ENCODE measurements at regions of chr9 and their contacts with region 1.

Region 1: DNA sequence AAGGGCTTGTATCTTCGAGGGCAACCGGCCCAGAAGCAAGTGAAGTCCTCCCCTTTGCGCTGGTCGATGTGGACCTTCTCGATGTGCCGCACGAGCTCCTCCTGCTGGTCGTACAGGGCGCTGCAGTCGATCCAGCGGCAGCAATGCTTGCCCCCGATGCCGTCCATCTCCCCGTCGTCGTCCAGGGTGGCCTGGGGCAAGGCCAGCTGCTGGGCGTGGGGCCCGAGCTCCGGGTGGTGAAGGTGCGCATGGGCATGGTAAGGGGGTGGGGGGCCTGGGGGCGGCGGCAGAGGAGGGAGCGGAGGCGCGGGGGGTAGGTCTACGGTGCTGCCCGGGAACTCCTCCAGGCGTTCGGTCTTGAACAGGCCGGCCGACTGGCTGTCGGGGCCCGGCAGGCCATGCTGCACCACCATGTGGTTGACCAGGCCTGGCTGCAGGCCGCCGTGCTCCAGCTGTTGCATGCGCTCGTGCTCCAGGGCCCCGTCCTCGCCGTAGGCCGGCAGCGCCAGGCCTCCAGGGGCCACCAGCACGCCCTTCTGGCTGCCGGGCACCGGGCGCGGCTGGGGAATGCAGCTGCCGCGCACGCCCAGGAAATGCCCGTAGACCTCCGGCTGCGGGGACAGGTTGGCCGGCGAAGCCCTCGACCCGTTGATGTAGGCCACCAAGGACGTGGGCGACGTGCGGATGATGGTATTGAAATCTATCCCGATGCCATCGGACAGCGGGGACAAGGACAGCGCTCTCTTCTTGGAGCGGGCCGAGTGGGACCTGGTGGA is 181.8 kb downstream of the GLIS3 start:
- DNase-seq: no peak
- ATAC-seq: peak; percentile 86
- H3K4me3 ChIP-seq: no peak overlapping the region
- H3K27ac ChIP-seq: no peak overlapping the region
- H3K4me1 ChIP-seq: no peaks in the 10 kb centered on the region
- H3K27me3 ChIP-seq: no peaks in the 10 kb centered on the region
- CTCF ChIP-seq: peak; percentile 35 to 79 (median 62); a peak in 5 of 6 replicates
- EP300 ChIP-seq: no peak
- POLR2A ChIP-seq: no peak
- RAD21 ChIP-seq: peak; percentile 46; the same call in 1 of the 2 replicates

Region 2: GRCh38 chr9:3732077-3733038 is 385.7 kb before region 1 on chr9:
- CTCF ChIA-PET with region 1: interaction called, 20 read pairs
- POLR2A ChIA-PET with region 1: no interaction called
- RAD21 ChIA-PET with region 1: interaction called, 3 read pairs
- SMC1A ChIA-PET with region 1: interaction called, 3 read pairs
- in situ Hi-C with region 1: loop called (anchors 5 kb)
- intact Hi-C with region 1: loop called (anchors 1 kb)
- DNase-seq: peak; percentile 64
- ATAC-seq: peak; percentile 88
- H3K4me3 ChIP-seq: no peak overlapping the region
- H3K27ac ChIP-seq: no peak overlapping the region
- H3K4me1 ChIP-seq: peaks cover 22% of the 10 kb centered on the region
- H3K27me3 ChIP-seq: no peaks in the 10 kb centered on the region
- CTCF ChIP-seq: peak; percentile 60 to 83 (median 65)
- EP300 ChIP-seq: no peak
- POLR2A ChIP-seq: no peak
- RAD21 ChIP-seq: peak; percentile 83

Region 3: GRCh38 chr9:4077499-4078102 is 40.4 kb before region 1 on chr9:
- CTCF ChIA-PET with region 1: interaction called, 4 read pairs
- POLR2A ChIA-PET with region 1: no interaction called
- RAD21 ChIA-PET with region 1: no interaction called
- SMC1A ChIA-PET with region 1: interaction called, 3 read pairs
- in situ Hi-C with region 1: no loop called
- intact Hi-C with region 1: loop called (anchors 5 kb)
- DNase-seq: no peak
- ATAC-seq: peak; percentile 88
- H3K4me3 ChIP-seq: no peak overlapping the region
- H3K27ac ChIP-seq: no peak overlapping the region
- H3K4me1 ChIP-seq: no peaks in the 10 kb centered on the region
- H3K27me3 ChIP-seq: no peaks in the 10 kb centered on the region
- CTCF ChIP-seq: peak; percentile 54 to 78 (median 72)
- EP300 ChIP-seq: no peak
- POLR2A ChIP-seq: no peak
- RAD21 ChIP-seq: peak; percentile 63